ENCODE measurements at regions of chr12 and their contacts with region 1.

Region 1: DNA sequence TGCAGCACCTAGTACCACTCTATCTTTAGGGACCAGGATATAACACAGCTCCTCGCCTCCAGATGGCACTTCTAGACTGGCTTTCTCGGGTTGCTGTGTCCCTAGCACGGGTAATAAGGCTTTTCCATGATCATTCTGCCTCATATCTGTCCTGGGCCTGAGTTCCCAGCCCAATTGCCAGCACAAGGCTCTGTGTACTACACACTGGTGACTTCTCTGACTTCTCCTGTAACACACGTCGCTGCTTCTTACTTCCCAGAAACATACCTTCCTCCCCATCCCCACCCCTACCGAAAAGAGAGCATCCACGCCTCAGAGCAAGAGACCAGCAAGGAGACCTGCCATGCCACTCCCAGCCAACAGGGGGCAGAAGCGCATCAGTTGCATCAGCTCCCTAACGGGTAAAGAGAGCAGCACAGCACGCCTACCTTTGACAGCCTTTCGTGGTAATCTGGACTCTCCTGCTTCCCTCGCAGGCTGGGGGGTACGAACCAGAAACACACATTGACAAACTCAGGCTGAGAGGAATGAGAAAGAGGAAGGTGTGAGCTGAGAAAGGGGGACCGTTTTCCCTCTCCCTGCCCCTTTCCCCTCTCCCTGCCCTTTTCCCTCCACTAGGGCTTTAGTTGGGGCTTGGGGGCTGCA is 21.2 kb upstream of the ZNF740 start:
- DNase-seq: peak; percentile 76 to 91 (median 83)
- H3K4me3 ChIP-seq: no peak overlapping the region
- H3K4me3 Mint-ChIP-seq: no peak overlapping the region
- H3K27ac ChIP-seq: no peak overlapping the region
- H3K27ac Mint-ChIP-seq: peak overlapping the region in 6 of 8 donors; percentile 26 to 81 (median 42)
- H3K4me1 ChIP-seq: peaks cover 8% of the 10 kb centered on the region
- H3K4me1 Mint-ChIP-seq: peaks cover 6 to 8% (median 6%) of the 10 kb centered on the region in 3 donors
- H3K27me3 ChIP-seq: no peaks in the 10 kb centered on the region
- H3K27me3 Mint-ChIP-seq: no peaks in the 10 kb centered on the region

Region 2: DNA sequence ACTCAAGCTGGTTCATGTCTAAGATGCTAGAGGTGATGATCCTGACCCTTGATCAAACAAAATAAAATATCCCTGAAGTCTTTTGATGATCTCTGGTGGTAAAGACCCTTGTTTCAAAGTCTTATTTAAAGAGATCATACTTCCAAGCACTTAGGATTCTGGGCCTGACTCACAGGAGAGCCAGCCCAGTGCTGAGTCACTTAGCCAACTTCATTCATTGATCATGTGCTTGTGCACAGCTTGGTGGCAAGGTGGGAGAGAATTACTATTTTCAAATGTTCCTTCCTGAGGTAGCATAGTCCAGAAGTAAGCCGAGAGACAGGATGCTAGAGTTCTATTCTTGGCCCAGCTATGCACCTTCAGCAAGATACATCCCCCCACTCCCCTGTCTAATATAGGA is 1527.7 kb before region 1 on chr12:
- CTCF ChIA-PET with region 1: no interaction called
- POLR2A ChIA-PET with region 1: no interaction called
- DNase-seq: no peak
- H3K4me3 ChIP-seq: no peak overlapping the region
- H3K4me3 Mint-ChIP-seq: no peak overlapping the region
- H3K27ac ChIP-seq: no peak overlapping the region
- H3K27ac Mint-ChIP-seq: no peak overlapping the region
- H3K4me1 ChIP-seq: no peaks in the 10 kb centered on the region
- H3K4me1 Mint-ChIP-seq: no peaks in the 10 kb centered on the region
- H3K27me3 ChIP-seq: no peaks in the 10 kb centered on the region
- H3K27me3 Mint-ChIP-seq: peaks cover 4 to 32% of the 10 kb centered on the region in 2 donors

Region 3: GRCh38 chr12:53014709-53015108 is 144.6 kb before region 1 on chr12:
- CTCF ChIA-PET with region 1: no interaction called
- POLR2A ChIA-PET with region 1: no interaction called
- DNase-seq: no peak
- H3K4me3 ChIP-seq: no peak overlapping the region
- H3K4me3 Mint-ChIP-seq: no peak overlapping the region
- H3K27ac ChIP-seq: no peak overlapping the region
- H3K27ac Mint-ChIP-seq: peak overlapping the region in 7 of 8 donors; percentile 1 to 55 (median 46)
- H3K4me1 ChIP-seq: peaks cover 23% of the 10 kb centered on the region
- H3K4me1 Mint-ChIP-seq: peaks cover 41 to 58% (median 46%) of the 10 kb centered on the region in 3 donors
- H3K27me3 ChIP-seq: no peaks in the 10 kb centered on the region
- H3K27me3 Mint-ChIP-seq: no peaks in the 10 kb centered on the region

Region 4: DNA sequence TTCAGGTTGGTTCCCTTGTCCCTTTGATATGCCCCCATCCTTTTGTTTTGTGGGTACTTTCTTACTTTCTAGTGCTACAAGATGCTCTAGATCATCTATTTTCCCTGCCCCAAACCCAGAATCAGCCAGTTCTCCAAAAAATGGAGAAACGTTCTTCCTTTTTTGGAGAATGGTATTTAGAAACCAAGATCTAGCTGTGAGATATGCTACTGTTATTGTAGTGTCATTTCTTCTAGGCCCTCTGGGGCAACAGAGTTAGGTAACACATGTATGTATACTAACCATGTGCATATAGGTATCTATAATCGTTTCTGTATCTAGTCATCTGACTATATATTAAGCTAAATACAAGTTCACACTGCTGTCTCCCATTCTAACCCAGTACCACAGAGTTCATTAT is 68.8 kb before region 1 on chr12:
- CTCF ChIA-PET with region 1: no interaction called
- POLR2A ChIA-PET with region 1: no interaction called
- DNase-seq: no peak
- H3K4me3 ChIP-seq: no peak overlapping the region
- H3K4me3 Mint-ChIP-seq: no peak overlapping the region
- H3K27ac ChIP-seq: no peak overlapping the region
- H3K27ac Mint-ChIP-seq: no peak overlapping the region
- H3K4me1 ChIP-seq: no peaks in the 10 kb centered on the region
- H3K4me1 Mint-ChIP-seq: no peaks in the 10 kb centered on the region
- H3K27me3 ChIP-seq: no peaks in the 10 kb centered on the region
- H3K27me3 Mint-ChIP-seq: peaks cover 1 to 8% of the 10 kb centered on the region in 2 donors

Region 5: DNA sequence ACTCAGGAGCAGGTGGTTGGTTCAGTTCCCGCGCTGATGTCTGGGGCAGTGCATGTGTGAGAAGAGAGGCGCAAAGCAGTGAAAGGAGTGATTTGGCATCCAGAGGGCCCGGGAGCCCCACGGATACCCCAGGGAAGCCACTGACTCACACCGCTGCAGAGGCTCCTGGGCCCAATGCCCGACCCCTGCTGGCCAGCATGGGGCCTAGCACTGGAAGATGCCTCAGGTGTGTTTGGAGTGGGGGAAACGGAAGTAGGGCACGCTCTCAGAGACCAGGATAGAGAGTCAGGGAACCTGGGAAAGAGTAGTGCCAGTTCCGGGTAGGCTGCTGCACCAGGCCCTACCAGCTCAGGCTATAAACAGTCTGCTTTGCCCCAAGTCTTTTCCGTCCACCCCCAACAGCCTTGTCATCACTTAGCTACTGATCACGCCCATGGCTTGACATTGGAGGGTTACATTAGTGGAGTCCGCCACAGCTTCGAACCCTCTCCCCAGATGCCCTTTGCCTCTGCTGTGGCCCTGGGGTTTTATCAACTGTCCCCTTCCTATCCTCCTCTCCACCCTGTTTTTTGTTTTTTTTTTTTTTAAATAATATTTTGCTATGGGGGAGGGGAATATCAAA is 30.9 kb after region 1 on chr12:
- CTCF ChIA-PET with region 1: interaction called, 43 read pairs
- POLR2A ChIA-PET with region 1: no interaction called
- DNase-seq: peak; percentile 33 to 67 (median 40)
- H3K4me3 ChIP-seq: no peak overlapping the region
- H3K4me3 Mint-ChIP-seq: no peak overlapping the region
- H3K27ac ChIP-seq: no peak overlapping the region
- H3K27ac Mint-ChIP-seq: peak overlapping the region; percentile 9 to 89 (median 70)
- H3K4me1 ChIP-seq: no peaks in the 10 kb centered on the region
- H3K4me1 Mint-ChIP-seq: peaks cover 12 to 35% (median 13%) of the 10 kb centered on the region in 3 donors
- H3K27me3 ChIP-seq: no peaks in the 10 kb centered on the region
- H3K27me3 Mint-ChIP-seq: no peaks in the 10 kb centered on the region

Region 6: DNA sequence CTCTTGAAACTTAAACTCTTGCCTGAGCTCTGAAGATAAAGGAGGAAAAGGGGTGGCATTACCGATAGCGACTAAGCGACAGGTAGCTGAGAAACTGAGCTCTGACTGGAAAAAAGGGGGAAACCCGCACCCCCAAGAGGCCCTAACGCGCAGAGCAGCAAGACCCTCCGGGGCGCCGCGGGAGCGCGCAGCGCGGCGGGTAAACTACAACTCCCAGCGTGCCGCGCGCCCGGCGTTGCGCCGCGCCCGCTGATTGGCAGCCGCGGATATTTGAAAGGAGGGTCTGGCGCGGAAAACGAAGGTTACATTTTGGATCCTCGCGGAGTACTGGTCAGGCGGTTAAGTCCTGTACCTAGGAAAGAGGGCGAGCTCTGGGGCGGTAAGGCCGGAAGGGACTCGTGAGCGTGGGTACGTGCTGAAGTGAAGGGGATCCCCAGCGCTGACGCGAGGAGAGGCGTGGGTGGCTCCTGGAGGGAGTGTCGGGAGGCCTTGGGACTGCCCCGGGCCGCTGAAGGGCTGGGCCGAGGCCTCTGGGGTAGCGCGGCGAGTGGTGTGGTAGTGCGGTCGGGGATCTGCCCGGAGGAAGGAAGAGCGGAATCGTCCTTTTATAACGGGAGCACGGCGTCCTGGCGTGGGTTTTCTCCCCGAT is 108.8 kb after region 1 on chr12 and contains the start of gene ESPL1:
- CTCF ChIA-PET with region 1: interaction called, 26 read pairs
- POLR2A ChIA-PET with region 1: no interaction called
- DNase-seq: peak; percentile 75 to 88 (median 84)
- H3K4me3 ChIP-seq: peak within 1 kb of the TSS; percentile 83
- H3K4me3 Mint-ChIP-seq: peak within 1 kb of the TSS; percentile 88 to 99 (median 94)
- H3K27ac ChIP-seq: peak within 1 kb of the TSS; percentile 67
- H3K27ac Mint-ChIP-seq: peak within 1 kb of the TSS; percentile 52 to 99 (median 90)
- H3K4me1 ChIP-seq: peaks cover 13% of the 10 kb centered on the region
- H3K4me1 Mint-ChIP-seq: peaks cover 16 to 21% (median 20%) of the 10 kb centered on the region in 3 donors
- H3K27me3 ChIP-seq: no peaks in the 10 kb centered on the region
- H3K27me3 Mint-ChIP-seq: no peaks in the 10 kb centered on the region
- total RNA-seq, gene ESPL1: 58.4 to 63.4 TPM

Region 7: DNA sequence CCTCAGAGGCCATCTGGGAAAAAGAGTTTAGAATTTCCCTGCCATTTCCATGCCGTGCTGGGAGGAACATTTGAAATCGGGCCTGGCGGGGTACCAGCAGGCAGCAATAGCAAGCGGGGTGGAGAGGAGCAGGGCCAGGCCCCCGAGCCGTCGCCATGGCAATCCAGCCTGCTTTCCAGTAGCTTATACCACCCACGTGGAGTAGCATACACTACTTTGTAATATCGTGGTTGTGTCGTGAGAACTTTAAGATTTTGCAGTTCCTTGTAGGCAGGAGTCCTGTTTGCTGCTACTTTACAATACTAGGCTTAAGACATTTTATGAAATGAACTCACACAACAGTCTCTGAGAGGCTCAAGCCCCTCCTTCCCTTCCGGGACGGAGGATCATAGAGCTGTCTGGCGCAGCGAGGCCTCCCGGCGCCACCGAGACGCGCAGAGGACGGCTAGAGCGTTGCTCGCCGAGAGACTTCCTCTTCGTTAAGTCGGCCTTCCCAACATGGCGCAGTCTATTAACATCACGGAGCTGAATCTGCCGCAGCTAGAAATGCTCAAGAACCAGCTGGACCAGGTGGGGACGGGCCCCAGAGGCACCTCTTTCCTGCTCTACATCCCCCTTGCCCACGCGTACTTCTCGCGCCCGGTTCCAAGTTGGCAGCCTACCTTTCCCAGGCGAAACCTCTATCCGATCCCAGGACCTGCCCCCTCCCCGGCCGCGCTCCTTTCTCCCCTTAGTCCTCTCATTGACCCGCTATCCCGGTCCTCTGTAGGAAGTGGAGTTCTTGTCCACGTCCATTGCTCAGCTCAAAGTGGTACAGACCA is 136.0 kb after region 1 on chr12 and contains the start of gene PFDN5:
- CTCF ChIA-PET with region 1: interaction called, 22 read pairs
- POLR2A ChIA-PET with region 1: no interaction called
- DNase-seq: peak; percentile 72 to 93 (median 87)
- H3K4me3 ChIP-seq: peak within 1 kb of the TSS; percentile 90
- H3K4me3 Mint-ChIP-seq: peak within 1 kb of the TSS; percentile 97 to 100 (median 100)
- H3K27ac ChIP-seq: peak within 1 kb of the TSS; percentile 87
- H3K27ac Mint-ChIP-seq: peak within 1 kb of the TSS; percentile 93 to 100 (median 99)
- H3K4me1 ChIP-seq: peaks cover 41% of the 10 kb centered on the region
- H3K4me1 Mint-ChIP-seq: peaks cover 43 to 53% (median 47%) of the 10 kb centered on the region in 3 donors
- H3K27me3 ChIP-seq: no peaks in the 10 kb centered on the region
- H3K27me3 Mint-ChIP-seq: no peaks in the 10 kb centered on the region
- total RNA-seq, gene PFDN5: 380 to 385 TPM

Region 8: DNA sequence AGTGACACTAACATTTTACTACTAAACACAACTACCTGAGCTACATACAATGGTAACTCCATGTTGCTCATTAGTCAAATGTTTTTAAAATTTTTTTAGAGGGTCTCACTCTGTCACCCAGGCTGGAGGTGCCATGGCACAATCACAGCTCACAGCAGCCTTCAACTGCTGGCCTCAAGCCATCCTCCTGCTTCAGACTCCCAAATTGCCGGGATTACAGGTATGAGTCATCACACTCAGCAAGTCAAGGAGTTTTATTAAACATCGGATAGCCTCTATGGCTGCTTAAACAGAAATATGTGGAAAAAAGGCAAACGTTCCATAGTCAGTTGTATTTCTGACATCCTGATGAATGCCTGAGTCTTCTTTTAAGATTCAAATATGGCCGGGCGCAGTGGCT is 359.1 kb after region 1 on chr12:
- CTCF ChIA-PET with region 1: no interaction called
- POLR2A ChIA-PET with region 1: no interaction called
- DNase-seq: no peak
- H3K4me3 ChIP-seq: no peak overlapping the region
- H3K4me3 Mint-ChIP-seq: no peak overlapping the region
- H3K27ac ChIP-seq: no peak overlapping the region
- H3K27ac Mint-ChIP-seq: no peak overlapping the region
- H3K4me1 ChIP-seq: no peaks in the 10 kb centered on the region
- H3K4me1 Mint-ChIP-seq: no peaks in the 10 kb centered on the region
- H3K27me3 ChIP-seq: no peaks in the 10 kb centered on the region
- H3K27me3 Mint-ChIP-seq: peaks cover 0 to 2% of the 10 kb centered on the region in 2 donors

Measured in CD8-positive, alpha-beta memory T cell (primary cell).